Mammary epithelial cell (primary cell): ENCODE measurements at regions of chr19 and their contacts with region 1.

Region 1: GRCh38 chr19:38095411-38096308 is 128.4 kb downstream of the DPF1 start:
- DNase-seq: peak; percentile 44
- H3K4me3 ChIP-seq: no peak overlapping the region
- H3K27ac ChIP-seq: no peak overlapping the region
- H3K4me1 ChIP-seq: no peaks in the 10 kb centered on the region
- H3K27me3 ChIP-seq: no peaks in the 10 kb centered on the region
- CTCF ChIP-seq: peak; percentile 84 to 86

Region 2: DNA sequence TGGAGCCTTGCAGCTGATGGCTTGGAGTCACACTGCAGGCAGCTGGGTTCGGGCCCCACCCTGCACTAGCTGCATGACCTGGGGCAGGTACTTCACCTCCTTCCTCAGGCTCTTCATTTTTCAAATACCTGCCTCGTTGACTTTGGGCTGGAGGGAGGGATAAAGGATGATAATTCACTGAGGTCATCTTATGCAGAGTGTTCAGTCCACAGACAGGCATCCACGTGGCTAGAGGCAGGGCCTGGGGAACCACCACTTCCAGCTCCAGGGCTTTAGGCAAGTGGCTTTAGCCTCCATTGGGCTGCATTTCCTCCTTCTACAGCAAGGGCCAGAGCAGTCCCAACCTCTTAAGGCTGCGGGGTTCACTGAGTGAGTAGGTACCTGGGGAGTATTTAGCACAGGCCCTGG is 103.8 kb before region 1 on chr19:
- CTCF ChIA-PET with region 1: interaction called, 3 read pairs
- dilution Hi-C with region 1: no loop called
- in situ Hi-C with region 1: no loop called
- intact Hi-C with region 1: loop called (anchors 5 kb)
- DNase-seq: peak; percentile 57
- H3K4me3 ChIP-seq: no peak overlapping the region
- H3K27ac ChIP-seq: peak overlapping the region; percentile 47
- H3K4me1 ChIP-seq: peaks cover 27% of the 10 kb centered on the region
- H3K27me3 ChIP-seq: no peaks in the 10 kb centered on the region
- CTCF ChIP-seq: no peak

Region 3: GRCh38 chr19:38033658-38034498 is 61.8 kb before region 1 on chr19:
- CTCF ChIA-PET with region 1: no interaction called
- dilution Hi-C with region 1: loop called (anchors 5 kb)
- in situ Hi-C with region 1: no loop called
- intact Hi-C with region 1: no loop called
- DNase-seq: no peak
- H3K4me3 ChIP-seq: no peak overlapping the region
- H3K27ac ChIP-seq: no peak overlapping the region
- H3K4me1 ChIP-seq: peaks cover 6% of the 10 kb centered on the region
- H3K27me3 ChIP-seq: no peaks in the 10 kb centered on the region
- CTCF ChIP-seq: no peak

Region 4: DNA sequence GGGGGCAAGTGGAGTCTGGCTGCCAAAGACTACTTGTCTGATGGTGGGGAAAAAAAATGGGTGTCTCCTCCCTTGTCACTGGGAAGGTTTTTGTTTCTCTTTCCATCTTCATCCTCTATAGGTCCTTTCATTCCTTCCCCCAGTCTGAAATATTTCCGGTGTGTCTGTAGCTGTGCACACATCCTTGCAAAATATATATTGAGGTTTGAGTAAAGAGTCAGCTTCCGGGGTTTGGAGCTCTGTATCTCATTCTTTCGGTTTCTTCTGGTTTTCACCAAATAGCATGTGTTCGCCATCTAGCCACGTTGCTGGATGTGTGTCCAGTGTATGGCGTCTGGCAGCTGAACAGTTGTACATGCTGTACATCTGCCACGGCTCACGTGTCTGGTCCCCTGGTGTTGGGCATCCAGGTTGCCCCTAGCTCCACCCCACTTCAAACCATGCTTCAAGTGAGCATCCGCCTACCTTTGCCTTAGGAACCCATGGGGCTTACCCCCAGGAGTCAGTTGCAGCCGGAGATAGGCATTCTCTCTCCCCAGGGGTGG is 46.5 kb before region 1 on chr19:
- CTCF ChIA-PET with region 1: no interaction called
- dilution Hi-C with region 1: no loop called
- in situ Hi-C with region 1: no loop called
- intact Hi-C with region 1: no loop called
- DNase-seq: no peak
- H3K4me3 ChIP-seq: no peak overlapping the region
- H3K27ac ChIP-seq: no peak overlapping the region
- H3K4me1 ChIP-seq: no peaks in the 10 kb centered on the region
- H3K27me3 ChIP-seq: no peaks in the 10 kb centered on the region
- CTCF ChIP-seq: no peak

Region 5: DNA sequence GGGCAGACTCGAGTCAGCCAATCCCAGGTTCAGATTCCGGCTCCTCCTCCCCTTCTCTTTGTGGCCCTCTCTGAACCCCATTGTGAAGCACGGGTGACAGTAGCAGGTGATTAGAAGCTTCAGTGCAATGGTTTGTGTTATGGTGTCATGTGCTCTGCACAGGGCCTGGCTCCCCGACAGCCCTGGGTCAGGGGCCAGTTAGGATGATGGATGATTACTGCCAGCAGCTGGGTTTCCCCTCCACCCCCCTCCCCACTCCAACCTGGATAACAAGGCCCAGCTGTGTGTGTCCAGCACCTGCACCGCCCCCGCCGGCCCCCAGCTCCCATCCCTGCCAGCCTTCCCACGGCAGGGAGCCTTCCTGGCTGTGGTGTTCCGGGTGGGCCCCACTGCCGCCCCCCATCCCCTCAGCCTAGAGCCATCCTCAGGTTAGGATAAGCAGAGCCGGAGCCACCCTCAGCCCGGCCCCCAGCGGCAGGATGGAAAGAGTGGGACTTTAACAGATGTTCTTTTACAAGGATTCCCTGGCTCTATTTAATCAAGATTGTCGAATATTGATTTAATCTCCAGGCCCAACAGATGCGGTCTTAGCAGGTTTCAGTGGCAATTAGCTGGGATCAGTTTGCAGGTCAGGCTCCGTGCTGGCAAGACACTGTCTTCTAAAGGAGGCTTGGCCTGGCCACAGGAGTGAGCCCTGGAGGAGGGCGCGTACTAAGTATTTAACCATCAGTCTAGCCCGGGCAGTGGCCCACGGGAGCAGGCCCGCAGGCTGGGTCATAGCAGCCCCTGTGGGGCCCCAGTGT is 32.5 kb before region 1 on chr19:
- CTCF ChIA-PET with region 1: no interaction called
- dilution Hi-C with region 1: loop called (anchors 5 kb)
- in situ Hi-C with region 1: no loop called
- intact Hi-C with region 1: no loop called
- DNase-seq: no peak
- H3K4me3 ChIP-seq: no peak overlapping the region
- H3K27ac ChIP-seq: no peak overlapping the region
- H3K4me1 ChIP-seq: peaks cover 10% of the 10 kb centered on the region
- H3K27me3 ChIP-seq: no peaks in the 10 kb centered on the region
- CTCF ChIP-seq: no peak

Region 6: GRCh38 chr19:38173291-38174041 is 77.8 kb after region 1 on chr19:
- CTCF ChIA-PET with region 1: no interaction called
- dilution Hi-C with region 1: no loop called
- in situ Hi-C with region 1: no loop called
- intact Hi-C with region 1: loop called (anchors 2 kb)
- DNase-seq: peak; percentile 96
- H3K4me3 ChIP-seq: peak overlapping the region; percentile 3 to 25 (median 14)
- H3K27ac ChIP-seq: peak overlapping the region; percentile 71
- H3K4me1 ChIP-seq: peaks cover 16% of the 10 kb centered on the region
- H3K27me3 ChIP-seq: no peaks in the 10 kb centered on the region
- CTCF ChIP-seq: no peak

Region 7: GRCh38 chr19:38194056-38194701 is 98.5 kb after region 1 on chr19:
- CTCF ChIA-PET with region 1: no interaction called
- dilution Hi-C with region 1: loop called (anchors 5 kb)
- in situ Hi-C with region 1: no loop called
- intact Hi-C with region 1: no loop called
- DNase-seq: peak; percentile 54
- H3K4me3 ChIP-seq: no peak overlapping the region
- H3K27ac ChIP-seq: no peak overlapping the region
- H3K4me1 ChIP-seq: peaks cover 5% of the 10 kb centered on the region
- H3K27me3 ChIP-seq: no peaks in the 10 kb centered on the region
- CTCF ChIP-seq: no peak